ENCODE measurements at regions of chr1 and their contacts with region 1.

Region 1: DNA sequence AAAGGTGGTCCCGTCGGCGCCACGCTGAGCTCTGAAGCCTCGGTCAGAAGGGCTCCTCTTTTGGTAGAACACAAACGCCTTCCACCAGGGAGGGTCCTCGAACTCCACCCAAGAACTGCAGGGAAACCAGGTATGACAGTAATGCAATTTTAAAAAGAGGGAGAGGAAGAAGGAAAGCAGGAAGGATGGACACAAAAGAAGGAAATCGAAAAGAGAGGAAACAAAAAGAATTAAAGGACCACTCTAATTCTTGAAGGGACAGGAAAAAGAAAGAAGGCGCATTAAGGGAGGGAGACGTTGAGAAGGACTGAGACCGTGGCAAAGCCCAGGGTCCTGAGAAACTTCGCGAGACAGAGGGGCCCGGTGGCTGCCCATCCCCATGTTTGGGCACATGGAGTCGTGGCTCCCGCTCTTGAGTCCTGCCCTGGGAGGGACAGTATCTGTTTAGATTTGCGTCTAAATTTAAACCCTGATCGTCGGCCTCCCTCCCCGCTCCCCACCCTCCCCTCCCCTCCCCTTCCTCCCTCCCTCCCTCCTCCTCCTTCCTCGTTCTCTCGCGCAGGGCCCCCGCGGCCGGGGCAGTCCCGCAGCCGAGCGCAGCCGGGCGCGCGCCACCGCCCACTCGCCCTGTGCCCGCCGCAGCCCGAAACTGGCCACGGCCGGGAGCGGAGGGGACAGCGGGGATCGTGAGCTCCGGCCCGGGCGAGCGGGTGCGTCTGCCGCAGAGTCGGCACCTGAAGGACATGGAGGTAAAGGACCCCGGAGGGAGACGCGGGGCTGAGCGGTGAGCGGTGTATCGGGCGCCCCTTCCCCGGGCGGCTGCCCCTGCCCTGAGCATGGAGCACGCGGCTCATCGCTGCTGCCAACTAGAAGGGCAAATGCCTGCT is at the start of gene RCSD1:
- DNase-seq: peak in 1 of 3 donors; percentile 53
- H3K4me3 ChIP-seq: peak within 1 kb of the TSS; percentile 84 to 100 (median 90)
- H3K4me3 Mint-ChIP-seq: peak within 1 kb of the TSS; percentile 93 to 97
- H3K27ac ChIP-seq: peak within 1 kb of the TSS; percentile 94 to 96
- H3K27ac Mint-ChIP-seq: peak within 1 kb of the TSS; percentile 90 to 98 (median 94)
- H3K4me1 ChIP-seq: peaks cover 66 to 77% of the 10 kb centered on the region in 2 donors
- H3K4me1 Mint-ChIP-seq: peaks cover 72% of the 10 kb centered on the region
- H3K27me3 ChIP-seq: no peaks in the 10 kb centered on the region
- H3K27me3 Mint-ChIP-seq: no peaks in the 10 kb centered on the region
- CTCF ChIP-seq: no peak
- polyA plus RNA-seq, gene RCSD1: 116 to 218 (median 216) TPM

Region 2: DNA sequence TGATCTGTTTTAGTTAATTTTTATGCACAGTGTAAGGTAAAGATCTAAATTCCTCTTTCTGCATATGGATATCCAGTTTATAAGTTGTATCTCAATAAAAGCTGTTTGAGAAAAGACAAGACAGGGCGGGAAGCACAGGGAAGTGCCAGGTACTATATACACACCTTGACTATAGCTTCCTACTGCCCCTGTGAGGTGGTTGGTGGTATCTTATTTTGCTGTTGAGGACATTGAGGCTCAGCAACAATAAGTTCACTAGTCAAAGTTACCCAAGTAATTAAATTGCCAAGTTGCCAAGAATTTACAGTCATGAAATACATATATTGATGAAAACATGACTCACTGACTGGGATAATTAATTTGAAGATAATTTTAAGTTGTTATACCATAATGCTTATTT is 220.7 kb before region 1 on chr1:
- intact Hi-C with region 1: no loop called
- DNase-seq: no peak
- H3K4me3 ChIP-seq: no peak overlapping the region
- H3K4me3 Mint-ChIP-seq: no peak overlapping the region
- H3K27ac ChIP-seq: no peak overlapping the region
- H3K27ac Mint-ChIP-seq: no peak overlapping the region
- H3K4me1 ChIP-seq: no peaks in the 10 kb centered on the region
- H3K4me1 Mint-ChIP-seq: peaks cover 2% of the 10 kb centered on the region
- H3K27me3 ChIP-seq: no peaks in the 10 kb centered on the region
- H3K27me3 Mint-ChIP-seq: peaks cover 0 to 2% (median 0%) of the 10 kb centered on the region in 3 donors
- CTCF ChIP-seq: no peak

Region 3: GRCh38 chr1:167563579-167564246 is 66.2 kb before region 1 on chr1:
- intact Hi-C with region 1: loop called in 1 of 2 experiments (anchors 10 kb)
- DNase-seq: peak; percentile 87 to 90 (median 88)
- H3K4me3 ChIP-seq: peak overlapping the region in 1 of 3 experiments; percentile 33
- H3K4me3 Mint-ChIP-seq: peak overlapping the region; percentile 56 to 75
- H3K27ac ChIP-seq: peak overlapping the region; percentile 79 to 83
- H3K27ac Mint-ChIP-seq: peak overlapping the region; percentile 89 to 98 (median 96)
- H3K4me1 ChIP-seq: peaks cover 52 to 58% of the 10 kb centered on the region in 2 donors
- H3K4me1 Mint-ChIP-seq: peaks cover 58% of the 10 kb centered on the region
- H3K27me3 ChIP-seq: no peaks in the 10 kb centered on the region
- H3K27me3 Mint-ChIP-seq: peaks cover 0 to 3% (median 2%) of the 10 kb centered on the region in 3 donors
- CTCF ChIP-seq: no peak

Region 4: DNA sequence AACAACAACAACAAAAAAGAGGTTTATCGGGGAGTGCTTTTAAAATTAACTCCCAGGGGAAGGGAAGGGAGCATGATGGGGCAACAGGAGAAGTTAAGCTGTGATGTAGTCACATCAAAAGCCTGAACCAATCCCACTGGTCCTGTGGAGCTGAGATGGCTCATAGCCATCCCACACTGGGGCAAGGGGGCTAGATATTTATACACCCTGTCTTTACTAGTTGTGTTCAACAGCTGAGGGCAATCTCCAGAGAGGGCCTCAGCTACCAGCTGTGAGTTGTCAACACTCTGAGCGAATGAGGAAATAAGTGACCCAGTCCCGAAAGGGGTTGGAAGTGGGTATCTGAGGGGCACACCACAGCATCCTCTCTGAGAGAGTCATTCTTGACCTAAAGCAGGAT is 45.3 kb before region 1 on chr1:
- intact Hi-C with region 1: no loop called
- DNase-seq: no peak
- H3K4me3 ChIP-seq: no peak overlapping the region
- H3K4me3 Mint-ChIP-seq: peak overlapping the region in 1 of 2 donors; percentile 48
- H3K27ac ChIP-seq: no peak overlapping the region
- H3K27ac Mint-ChIP-seq: peak overlapping the region in 1 of 7 donors; percentile 35
- H3K4me1 ChIP-seq: peaks cover 18 to 19% of the 10 kb centered on the region in 2 donors
- H3K4me1 Mint-ChIP-seq: peaks cover 24% of the 10 kb centered on the region
- H3K27me3 ChIP-seq: no peaks in the 10 kb centered on the region
- H3K27me3 Mint-ChIP-seq: peaks cover 0 to 7% (median 3%) of the 10 kb centered on the region in 3 donors
- CTCF ChIP-seq: no peak

Region 5: DNA sequence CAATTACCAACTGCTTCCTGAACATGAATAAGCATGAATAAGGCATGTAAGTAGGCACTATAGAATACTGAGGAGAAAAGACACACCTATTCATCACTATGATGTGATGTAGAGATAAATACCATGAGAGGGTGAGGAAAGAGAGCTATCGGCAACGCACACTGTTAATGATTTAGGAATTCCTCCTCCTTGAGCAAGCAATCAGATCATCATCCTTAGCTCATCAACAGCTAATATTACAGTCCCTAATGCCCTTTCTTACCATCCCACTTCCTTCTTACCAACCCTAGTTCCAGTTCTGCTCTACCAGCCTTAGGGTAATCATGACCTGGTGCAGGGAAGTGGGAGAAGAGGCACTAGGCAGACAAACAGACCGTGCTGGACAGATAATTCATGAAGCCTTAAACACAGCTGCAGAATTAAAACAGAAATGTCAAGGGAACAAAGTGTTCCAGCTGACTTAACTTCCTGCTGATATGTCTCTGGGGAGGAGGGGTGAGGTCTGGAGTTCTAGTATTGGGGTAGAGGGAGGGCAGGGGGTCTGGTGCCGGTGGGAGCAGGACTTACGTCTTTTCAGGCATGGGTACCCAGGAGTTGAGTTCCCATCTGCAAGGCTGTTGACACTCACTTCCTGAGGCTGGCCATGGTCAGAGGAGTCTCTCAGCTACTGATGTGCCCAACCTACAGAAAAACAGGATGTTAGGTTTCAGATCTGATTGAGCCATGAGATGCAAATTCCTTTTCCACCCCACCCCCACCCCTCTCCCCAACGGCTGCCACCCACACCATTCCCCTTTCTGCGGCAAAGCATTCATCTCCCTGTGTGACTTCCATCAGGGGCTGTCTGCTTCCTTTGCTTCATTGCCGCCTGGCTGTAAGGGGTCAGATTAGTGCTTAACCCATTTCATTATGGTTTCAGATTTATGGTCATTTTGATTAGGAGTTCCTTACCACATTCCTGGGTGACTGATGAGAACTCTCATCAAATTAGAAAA is 12.5 kb before region 1 on chr1:
- intact Hi-C with region 1: loop called (anchors 2 kb)
- DNase-seq: peak; percentile 65 to 84 (median 82)
- H3K4me3 ChIP-seq: peak overlapping the region; percentile 3 to 56 (median 20)
- H3K4me3 Mint-ChIP-seq: peak overlapping the region; percentile 62 to 65
- H3K27ac ChIP-seq: peak overlapping the region; percentile 80 to 82
- H3K27ac Mint-ChIP-seq: peak overlapping the region; percentile 93 to 98 (median 95)
- H3K4me1 ChIP-seq: peaks cover 74 to 81% of the 10 kb centered on the region in 2 donors
- H3K4me1 Mint-ChIP-seq: peaks cover 73% of the 10 kb centered on the region
- H3K27me3 ChIP-seq: no peaks in the 10 kb centered on the region
- H3K27me3 Mint-ChIP-seq: peaks cover 0 to 6% (median 0%) of the 10 kb centered on the region in 3 donors
- CTCF ChIP-seq: no peak

Region 6: GRCh38 chr1:167774710-167775109 is 144.8 kb after region 1 on chr1:
- intact Hi-C with region 1: no loop called
- DNase-seq: no peak
- H3K4me3 ChIP-seq: no peak overlapping the region
- H3K4me3 Mint-ChIP-seq: no peak overlapping the region
- H3K27ac ChIP-seq: no peak overlapping the region
- H3K27ac Mint-ChIP-seq: peak overlapping the region in 2 of 7 donors; percentile 24 to 71
- H3K4me1 ChIP-seq: no peaks in the 10 kb centered on the region
- H3K4me1 Mint-ChIP-seq: peaks cover 7% of the 10 kb centered on the region
- H3K27me3 ChIP-seq: no peaks in the 10 kb centered on the region
- H3K27me3 Mint-ChIP-seq: no peaks in the 10 kb centered on the region
- CTCF ChIP-seq: no peak